ENCODE measurements at regions of chr4 and their contacts with region 1.

Region 1: DNA sequence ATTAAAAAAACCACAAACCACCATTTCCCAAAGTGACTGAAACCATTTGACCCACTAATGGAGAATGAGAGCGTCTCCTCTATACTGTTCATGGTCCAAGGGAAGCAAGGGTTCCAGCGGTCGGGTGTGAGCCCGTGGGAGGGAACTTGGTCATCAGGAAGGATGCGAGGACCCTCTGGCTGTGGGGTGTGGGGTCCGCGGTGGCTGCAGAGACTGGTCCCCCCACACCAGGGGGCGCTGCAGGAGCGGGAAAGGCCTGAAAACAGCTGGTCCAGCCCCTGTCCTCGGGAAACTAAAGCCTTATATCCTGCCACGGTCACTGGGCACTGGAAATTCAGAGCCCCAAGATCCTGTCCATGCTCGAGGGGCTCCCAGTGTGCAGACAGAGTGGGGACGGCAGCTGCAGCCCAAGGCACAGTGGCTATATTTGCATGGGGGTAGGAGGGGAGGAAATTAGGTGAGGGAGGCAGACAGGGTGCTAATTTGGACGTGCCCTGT is 4.3 kb downstream of the BLOC1S4 start:
- DNase-seq: peak; percentile 80
- H3K4me3 ChIP-seq: no peak overlapping the region
- H3K27ac ChIP-seq: no peak overlapping the region
- H3K4me1 ChIP-seq: peaks cover 17% of the 10 kb centered on the region
- H3K27me3 ChIP-seq: no peaks in the 10 kb centered on the region
- CTCF ChIP-seq: peak; percentile 87 to 92 (median 90)
- POLR2A ChIP-seq: no peak

Region 2: DNA sequence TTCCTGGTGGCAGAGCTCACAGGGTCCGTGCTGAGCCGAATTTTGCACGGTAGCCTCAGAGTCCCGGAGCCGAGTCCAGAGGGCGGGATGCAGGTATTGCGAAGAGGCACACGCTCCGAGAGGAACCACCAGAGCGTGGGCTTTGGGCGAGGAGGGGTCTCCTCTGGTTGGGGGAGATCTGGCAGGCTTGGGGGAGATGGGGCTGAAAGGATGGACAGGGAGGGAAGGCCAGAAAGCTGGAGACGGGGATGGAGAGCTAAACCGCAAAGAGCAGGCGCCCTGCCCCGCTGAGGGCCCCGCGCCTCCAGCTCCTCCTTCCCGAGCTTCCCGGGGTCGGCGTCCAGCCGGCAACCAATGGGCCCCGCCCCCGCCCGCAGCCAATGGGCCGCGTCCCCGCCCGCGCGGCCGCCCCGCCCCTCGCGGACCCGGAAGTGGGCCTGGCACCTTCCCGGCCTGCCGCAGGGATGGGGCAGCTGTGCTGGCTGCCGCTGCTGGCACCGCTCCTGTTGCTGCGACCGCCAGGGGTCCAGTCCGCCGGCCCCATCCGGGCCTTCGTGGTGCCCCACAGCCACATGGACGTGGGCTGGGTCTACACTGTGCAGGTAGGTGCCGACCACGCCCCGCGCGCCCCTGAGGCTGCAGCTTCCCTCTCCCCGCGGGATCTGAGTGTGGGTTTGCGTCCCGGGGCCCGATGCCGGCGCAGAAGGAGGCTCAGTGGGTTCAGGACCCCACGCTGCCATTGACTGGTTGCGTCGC is 145.3 kb before region 1 on chr4 and contains the start of gene MAN2B2:
- intact Hi-C with region 1: no loop called
- DNase-seq: peak; percentile 90
- H3K4me3 ChIP-seq: peak within 1 kb of the TSS; percentile 73 to 78
- H3K27ac ChIP-seq: peak within 1 kb of the TSS in 1 of 2 donors; percentile 34
- H3K4me1 ChIP-seq: peaks cover 8% of the 10 kb centered on the region
- H3K27me3 ChIP-seq: no peaks in the 10 kb centered on the region
- CTCF ChIP-seq: no peak
- POLR2A ChIP-seq: no peak
- total RNA-seq, gene MAN2B2: 17.0 to 23.7 TPM

Region 3: GRCh38 chr4:6873792-6874461 is 153.7 kb after region 1 on chr4:
- intact Hi-C with region 1: loop called (anchors 5 kb)
- DNase-seq: peak; percentile 85
- H3K4me3 ChIP-seq: no peak overlapping the region
- H3K27ac ChIP-seq: no peak overlapping the region
- H3K4me1 ChIP-seq: no peaks in the 10 kb centered on the region
- H3K27me3 ChIP-seq: no peaks in the 10 kb centered on the region
- CTCF ChIP-seq: peak; percentile 75 to 87 (median 85)
- POLR2A ChIP-seq: no peak

Measured in testis (tissue), 5 donors.